ENCODE measurements at regions of chr10 and their contacts with region 1.

Region 1: GRCh38 chr10:69092959-69093850 is 5.3 kb downstream of the SRGN start:
- DNase-seq: peak; percentile 94
- ATAC-seq: peak; percentile 42
- H3K4me3 Mint-ChIP-seq: peak overlapping the region; percentile 20
- H3K27ac Mint-ChIP-seq: peak overlapping the region; percentile 79
- H3K4me1 Mint-ChIP-seq: peaks cover 69% of the 10 kb centered on the region
- H3K27me3 Mint-ChIP-seq: no peaks in the 10 kb centered on the region

Region 2: GRCh38 chr10:68973975-68974374 is 119.2 kb before region 1 on chr10:
- CTCF ChIA-PET with region 1: interaction called, 12 read pairs
- POLR2A ChIA-PET with region 1: interaction called, 3 read pairs
- DNase-seq: no peak
- ATAC-seq: no peak
- H3K4me3 Mint-ChIP-seq: no peak overlapping the region
- H3K27ac Mint-ChIP-seq: no peak overlapping the region
- H3K4me1 Mint-ChIP-seq: peaks cover 27% of the 10 kb centered on the region
- H3K27me3 Mint-ChIP-seq: no peaks in the 10 kb centered on the region

Region 3: GRCh38 chr10:69004821-69005220 is 88.4 kb before region 1 on chr10:
- CTCF ChIA-PET with region 1: interaction called, 199 read pairs
- POLR2A ChIA-PET with region 1: interaction called, 18 read pairs
- DNase-seq: no peak
- ATAC-seq: peak; percentile 49
- H3K4me3 Mint-ChIP-seq: no peak overlapping the region
- H3K27ac Mint-ChIP-seq: no peak overlapping the region
- H3K4me1 Mint-ChIP-seq: peaks cover 2% of the 10 kb centered on the region
- H3K27me3 Mint-ChIP-seq: no peaks in the 10 kb centered on the region

Region 4: DNA sequence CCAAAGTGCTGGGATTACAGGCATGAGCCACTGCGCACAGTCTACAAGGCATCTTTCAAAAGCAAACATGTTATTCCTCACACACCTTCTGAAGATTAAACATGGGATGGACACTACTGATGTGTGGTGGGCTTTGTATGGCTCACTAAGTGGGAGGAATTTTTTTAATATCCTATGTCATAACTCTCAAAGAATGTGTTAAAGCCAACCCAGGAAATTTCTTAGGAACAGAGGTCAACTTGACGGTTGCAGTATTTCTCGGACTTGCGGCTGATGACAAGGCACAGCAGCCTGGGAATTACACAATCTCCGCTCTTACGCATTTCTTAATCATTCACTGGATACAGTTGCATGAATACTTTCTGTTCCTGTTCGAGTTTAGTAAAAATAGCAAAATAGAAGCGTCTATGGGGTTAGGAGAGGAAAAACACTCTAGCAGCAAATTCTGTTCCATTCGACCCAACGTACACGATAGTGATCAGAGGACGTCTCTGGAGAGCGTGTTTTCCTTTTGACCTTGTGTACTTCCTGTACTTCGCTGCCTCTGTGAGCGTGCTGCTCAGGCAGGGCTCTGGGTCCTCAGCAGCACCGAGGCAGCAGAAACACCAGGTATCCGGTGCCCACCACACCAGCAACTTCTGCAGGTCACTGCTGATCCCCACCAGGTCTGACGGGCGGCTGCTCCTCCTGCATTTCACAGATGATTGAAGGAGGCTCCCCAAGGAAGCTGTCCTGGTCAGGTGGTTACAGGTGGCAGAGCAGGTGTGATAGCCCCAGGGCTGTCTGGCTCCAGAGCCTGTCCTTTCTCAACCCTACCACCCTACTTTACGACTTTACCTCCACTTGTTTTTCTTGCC is 31.7 kb before region 1 on chr10:
- CTCF ChIA-PET with region 1: interaction called, 22 read pairs
- POLR2A ChIA-PET with region 1: interaction called, 40 read pairs
- DNase-seq: peak; percentile 45
- ATAC-seq: peak; percentile 79
- H3K4me3 Mint-ChIP-seq: peak overlapping the region; percentile 27
- H3K27ac Mint-ChIP-seq: peak overlapping the region; percentile 45
- H3K4me1 Mint-ChIP-seq: peaks cover 57% of the 10 kb centered on the region
- H3K27me3 Mint-ChIP-seq: no peaks in the 10 kb centered on the region

Measured in activated CD8-positive, alpha-beta T cell treated with anti-CD3 and anti-CD28 coated beads, Interleukin-2, amount 10 ng/mL, durations not matched to agents 7 days and 5 days (primary cell).